ENCODE measurements at regions of chr17 and their contacts with region 1.

Region 1: GRCh38 chr17:80819461-80820161 is 172.0 kb upstream of the CHMP6 start:
- DNase-seq: peak in 1 of 2 experiments; percentile 25
- H3K4me3 ChIP-seq: no peak overlapping the region
- H3K4me3 Mint-ChIP-seq: peak overlapping the region; percentile 14
- H3K27ac Mint-ChIP-seq: peak overlapping the region; percentile 90
- H3K4me1 ChIP-seq: peaks cover 31% of the 10 kb centered on the region
- H3K4me1 Mint-ChIP-seq: peaks cover 46% of the 10 kb centered on the region
- H3K27me3 ChIP-seq: no peaks in the 10 kb centered on the region
- H3K27me3 Mint-ChIP-seq: no peaks in the 10 kb centered on the region
- CTCF ChIP-seq: no peak

Region 2: DNA sequence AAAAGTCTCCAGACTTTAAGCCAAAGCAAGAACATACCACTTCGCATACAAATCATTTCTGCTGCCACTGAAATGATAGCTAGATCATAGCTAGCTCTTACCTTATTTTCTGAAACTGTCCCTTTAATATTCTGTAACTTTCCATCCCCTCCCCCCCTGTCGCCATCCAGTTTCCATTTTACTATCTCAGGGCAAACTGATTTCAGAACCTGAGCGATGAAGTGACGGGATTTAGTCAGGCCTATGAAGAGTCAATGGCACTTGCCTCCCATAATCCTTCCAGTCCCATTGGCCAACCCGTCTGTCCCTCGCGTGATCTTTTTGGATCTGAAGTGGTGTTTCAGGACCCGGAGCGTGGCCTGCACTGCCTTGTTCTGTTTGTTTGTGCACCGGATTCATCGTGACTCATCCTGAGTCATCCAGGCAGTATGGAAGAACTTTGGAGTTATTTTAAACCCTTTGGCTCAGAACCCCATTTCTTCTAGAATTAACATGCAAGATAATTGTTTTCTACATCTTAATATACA is 27.8 kb before region 1 on chr17:
- CTCF ChIA-PET with region 1: interaction called, 3 read pairs
- POLR2A ChIA-PET with region 1: interaction called, 4 read pairs
- intact Hi-C with region 1: loop called (anchors 2 kb)
- DNase-seq: peak; percentile 87
- H3K4me3 ChIP-seq: no peak overlapping the region
- H3K4me3 Mint-ChIP-seq: peak overlapping the region; percentile 62
- H3K27ac Mint-ChIP-seq: peak overlapping the region; percentile 88
- H3K4me1 ChIP-seq: peaks cover 31% of the 10 kb centered on the region
- H3K4me1 Mint-ChIP-seq: peaks cover 52% of the 10 kb centered on the region
- H3K27me3 ChIP-seq: no peaks in the 10 kb centered on the region
- H3K27me3 Mint-ChIP-seq: no peaks in the 10 kb centered on the region
- CTCF ChIP-seq: no peak

Region 3: DNA sequence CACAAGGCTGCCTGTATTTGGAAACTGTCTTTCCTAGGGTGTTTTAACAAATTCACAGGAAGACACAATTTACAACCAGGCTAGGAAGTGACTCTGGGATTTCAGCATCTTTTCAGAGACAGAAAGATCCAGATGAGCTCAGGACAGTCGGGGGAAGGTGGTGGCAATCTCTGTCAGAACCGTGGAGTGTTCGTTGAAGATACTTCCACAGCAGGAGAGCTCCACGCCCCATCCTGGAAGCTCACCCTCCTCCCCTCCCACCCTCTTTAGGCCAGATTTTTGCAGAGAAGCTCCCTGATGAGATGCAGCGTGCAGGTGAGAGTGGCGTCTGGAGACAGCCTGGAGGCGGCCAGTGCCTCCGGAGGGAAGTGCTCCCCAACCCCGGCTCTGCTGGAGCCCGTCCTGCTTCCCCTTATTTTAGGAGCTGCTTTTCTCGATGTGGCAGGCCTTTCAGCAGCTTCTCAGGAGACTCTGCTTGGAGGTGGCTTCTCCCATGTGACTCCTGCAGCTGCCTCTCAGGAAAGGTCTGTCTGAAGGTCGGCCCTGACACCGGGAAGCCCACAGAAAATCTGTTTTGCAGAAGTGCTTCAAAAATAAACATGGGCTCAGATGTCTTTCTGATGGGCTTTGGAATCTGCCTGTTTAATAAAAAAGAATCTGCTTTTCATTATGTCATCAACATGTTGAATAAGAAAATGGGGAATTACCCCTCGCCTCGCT is 14.4 kb before region 1 on chr17:
- CTCF ChIA-PET with region 1: no interaction called
- POLR2A ChIA-PET with region 1: no interaction called
- intact Hi-C with region 1: no loop called
- DNase-seq: peak in 1 of 2 experiments; percentile 22
- H3K4me3 ChIP-seq: no peak overlapping the region
- H3K4me3 Mint-ChIP-seq: no peak overlapping the region
- H3K27ac Mint-ChIP-seq: no peak overlapping the region
- H3K4me1 ChIP-seq: no peaks in the 10 kb centered on the region
- H3K4me1 Mint-ChIP-seq: no peaks in the 10 kb centered on the region
- H3K27me3 ChIP-seq: no peaks in the 10 kb centered on the region
- H3K27me3 Mint-ChIP-seq: no peaks in the 10 kb centered on the region
- CTCF ChIP-seq: no peak

Region 4: DNA sequence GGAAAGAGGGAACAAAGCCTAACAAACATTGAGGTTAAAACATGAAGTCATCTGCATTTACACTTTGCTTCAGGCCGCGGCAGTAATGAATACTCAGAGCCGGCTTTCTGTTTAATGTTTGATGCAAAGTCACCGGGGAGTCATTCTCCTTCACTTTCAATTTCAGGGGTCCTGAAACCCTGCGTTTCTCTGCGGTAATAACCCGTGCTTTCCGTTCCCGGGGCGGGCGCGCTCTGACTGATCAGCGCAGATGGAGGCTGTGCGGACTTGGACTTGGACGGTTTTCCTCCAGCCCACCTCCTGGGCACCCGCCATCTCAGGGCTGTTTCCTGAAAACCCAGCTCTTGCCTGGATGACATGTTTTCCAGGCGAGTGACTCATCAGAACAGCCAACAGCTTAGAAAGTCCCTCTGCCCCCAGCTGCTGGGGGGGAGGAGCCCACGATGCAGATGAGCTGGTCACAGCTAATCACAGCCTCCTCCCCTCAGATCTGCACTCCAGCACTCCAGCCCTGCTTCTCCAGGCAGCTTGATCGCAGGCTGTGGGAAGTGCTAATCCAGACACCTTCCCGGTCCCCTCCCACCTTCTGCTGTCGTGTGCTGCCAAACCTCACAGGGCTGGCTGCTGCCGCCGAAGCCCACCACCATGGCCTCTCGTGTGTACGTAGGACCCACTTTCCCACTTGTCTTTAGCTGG is 13.4 kb after region 1 on chr17:
- CTCF ChIA-PET with region 1: interaction called, 4 read pairs
- POLR2A ChIA-PET with region 1: interaction called, 3 read pairs
- intact Hi-C with region 1: loop called (anchors 1 kb)
- DNase-seq: peak; percentile 89 to 91
- H3K4me3 ChIP-seq: peak overlapping the region; percentile 39
- H3K4me3 Mint-ChIP-seq: peak overlapping the region; percentile 77
- H3K27ac Mint-ChIP-seq: peak overlapping the region; percentile 98
- H3K4me1 ChIP-seq: peaks cover 15% of the 10 kb centered on the region
- H3K4me1 Mint-ChIP-seq: peaks cover 20% of the 10 kb centered on the region
- H3K27me3 ChIP-seq: no peaks in the 10 kb centered on the region
- H3K27me3 Mint-ChIP-seq: no peaks in the 10 kb centered on the region
- CTCF ChIP-seq: no peak

Region 5: GRCh38 chr17:80855948-80856862 is 36.6 kb after region 1 on chr17:
- CTCF ChIA-PET with region 1: no interaction called
- POLR2A ChIA-PET with region 1: no interaction called
- intact Hi-C with region 1: no loop called
- DNase-seq: peak; percentile 35 to 64
- H3K4me3 ChIP-seq: no peak overlapping the region
- H3K4me3 Mint-ChIP-seq: no peak overlapping the region
- H3K27ac Mint-ChIP-seq: peak overlapping the region; percentile 61
- H3K4me1 ChIP-seq: peaks cover 7% of the 10 kb centered on the region
- H3K4me1 Mint-ChIP-seq: peaks cover 10% of the 10 kb centered on the region
- H3K27me3 ChIP-seq: no peaks in the 10 kb centered on the region
- H3K27me3 Mint-ChIP-seq: no peaks in the 10 kb centered on the region
- CTCF ChIP-seq: no peak

Measured in Caco-2 (cell line).